ENCODE measurements at regions of chr5 and their contacts with region 1.

Region 1: DNA sequence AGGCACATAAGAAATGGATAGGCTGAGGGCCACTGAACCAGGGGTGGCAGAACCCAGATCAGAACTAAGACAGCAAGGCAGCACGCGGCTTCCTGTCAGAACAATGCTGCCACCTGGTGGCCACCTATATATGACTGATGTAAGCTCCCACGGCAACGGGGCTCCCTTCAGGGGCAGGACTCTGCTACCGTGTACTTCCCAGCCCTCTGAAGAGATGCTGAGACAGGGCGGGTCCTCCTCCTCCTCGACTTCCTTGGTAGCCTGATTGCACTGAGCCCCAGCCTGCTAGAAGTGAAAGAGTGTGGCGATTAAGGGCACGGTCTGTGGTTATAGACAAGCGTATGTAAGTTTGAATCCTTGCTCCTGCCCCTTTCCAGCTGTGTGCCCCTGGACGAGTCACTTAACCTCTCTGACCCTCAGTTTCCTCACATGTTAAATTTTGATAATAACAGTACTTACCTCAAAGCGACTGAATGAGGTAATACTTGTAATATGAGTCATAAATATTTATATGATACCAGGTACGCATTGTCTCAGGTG is 13.3 kb downstream of the RPS14 start:
- DNase-seq: peak; percentile 89
- ATAC-seq: peak; percentile 81
- H3K4me3 ChIP-seq: no peak overlapping the region
- H3K27ac ChIP-seq: no peak overlapping the region
- H3K4me1 ChIP-seq: peaks cover 5% of the 10 kb centered on the region
- H3K27me3 ChIP-seq: no peaks in the 10 kb centered on the region
- CTCF ChIP-seq: peak; percentile 85
- POLR2A ChIP-seq: no peak
- RAD21 ChIP-seq: peak; percentile 88

Region 2: GRCh38 chr5:150000256-150000989 is 435.8 kb before region 1 on chr5 and contains the starts of genes HMGXB3 and TIGD6:
- CTCF ChIA-PET with region 1: no interaction called
- POLR2A ChIA-PET with region 1: no interaction called
- dilution Hi-C with region 1: no loop called
- in situ Hi-C with region 1: no loop called
- intact Hi-C with region 1: loop called (anchors 10 kb)
- DNase-seq: peak; percentile 95
- ATAC-seq: peak; percentile 88
- H3K4me3 ChIP-seq: peak within 1 kb of the TSS; percentile 62
- H3K27ac ChIP-seq: peak within 1 kb of the TSS; percentile 75
- H3K4me1 ChIP-seq: no peaks in the 10 kb centered on the region; the same call in 1 of the 2 replicates
- H3K27me3 ChIP-seq: no peaks in the 10 kb centered on the region
- CTCF ChIP-seq: no peak
- POLR2A ChIP-seq: peak; percentile 92
- RAD21 ChIP-seq: no peak; the same call in 1 of the 2 replicates
- total RNA-seq, gene HMGXB3: 27.6 and 29.2 TPM in 2 replicates
- total RNA-seq, gene TIGD6: 6.1 and 6.6 TPM in 2 replicates

Region 3: DNA sequence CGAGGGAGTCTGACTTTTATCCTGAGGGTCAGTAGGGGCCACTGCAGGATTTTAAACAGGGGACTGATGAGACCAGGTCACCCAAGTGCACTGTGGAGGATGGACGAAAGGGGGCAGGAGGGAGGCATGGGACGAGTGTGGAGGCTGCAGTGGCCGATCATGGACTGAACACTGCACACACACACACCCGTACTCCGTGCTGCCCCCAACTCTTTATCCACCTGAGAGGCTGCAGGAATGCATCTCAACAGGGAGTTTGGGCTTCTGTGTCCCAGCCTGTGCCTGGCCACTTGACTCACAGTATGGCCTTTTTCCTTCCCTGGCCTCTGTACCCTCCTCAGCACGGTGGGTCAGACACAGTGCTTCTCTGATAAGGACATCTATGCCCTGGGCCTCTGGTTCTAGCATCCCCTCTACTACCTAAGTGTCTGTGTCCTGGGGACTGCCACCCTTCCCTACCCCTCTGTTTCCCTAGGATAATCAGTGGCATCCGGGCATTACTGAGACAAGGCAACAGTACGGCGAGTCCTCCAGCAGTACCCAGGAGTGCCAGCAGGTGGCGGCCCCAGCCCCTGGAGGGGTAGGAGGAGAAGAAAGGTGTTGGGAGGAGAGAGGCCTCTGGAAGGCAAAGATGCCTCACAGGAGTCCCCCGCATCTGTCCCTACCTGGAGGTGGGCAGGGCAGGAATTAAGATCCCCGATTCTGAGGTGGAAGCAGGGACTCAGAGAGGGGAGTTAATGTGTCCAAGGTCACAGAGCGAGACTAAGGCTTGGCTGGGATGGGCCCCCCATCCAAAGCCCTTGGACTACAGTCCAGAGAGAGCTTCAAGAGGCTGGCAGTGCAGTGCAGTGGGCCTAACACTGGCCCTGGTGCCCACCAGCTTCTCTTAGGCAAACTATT is 274.7 kb before region 1 on chr5:
- CTCF ChIA-PET with region 1: no interaction called
- POLR2A ChIA-PET with region 1: no interaction called
- dilution Hi-C with region 1: no loop called
- in situ Hi-C with region 1: no loop called
- intact Hi-C with region 1: loop called (anchors 1 kb)
- DNase-seq: peak; percentile 65
- ATAC-seq: peak; percentile 91
- H3K4me3 ChIP-seq: no peak overlapping the region
- H3K27ac ChIP-seq: no peak overlapping the region
- H3K4me1 ChIP-seq: peaks cover 26% of the 10 kb centered on the region
- H3K27me3 ChIP-seq: no peaks in the 10 kb centered on the region
- CTCF ChIP-seq: peak; percentile 94
- POLR2A ChIP-seq: peak; percentile 8; the same call in 1 of the 2 replicates
- RAD21 ChIP-seq: peak; percentile 91

Region 4: DNA sequence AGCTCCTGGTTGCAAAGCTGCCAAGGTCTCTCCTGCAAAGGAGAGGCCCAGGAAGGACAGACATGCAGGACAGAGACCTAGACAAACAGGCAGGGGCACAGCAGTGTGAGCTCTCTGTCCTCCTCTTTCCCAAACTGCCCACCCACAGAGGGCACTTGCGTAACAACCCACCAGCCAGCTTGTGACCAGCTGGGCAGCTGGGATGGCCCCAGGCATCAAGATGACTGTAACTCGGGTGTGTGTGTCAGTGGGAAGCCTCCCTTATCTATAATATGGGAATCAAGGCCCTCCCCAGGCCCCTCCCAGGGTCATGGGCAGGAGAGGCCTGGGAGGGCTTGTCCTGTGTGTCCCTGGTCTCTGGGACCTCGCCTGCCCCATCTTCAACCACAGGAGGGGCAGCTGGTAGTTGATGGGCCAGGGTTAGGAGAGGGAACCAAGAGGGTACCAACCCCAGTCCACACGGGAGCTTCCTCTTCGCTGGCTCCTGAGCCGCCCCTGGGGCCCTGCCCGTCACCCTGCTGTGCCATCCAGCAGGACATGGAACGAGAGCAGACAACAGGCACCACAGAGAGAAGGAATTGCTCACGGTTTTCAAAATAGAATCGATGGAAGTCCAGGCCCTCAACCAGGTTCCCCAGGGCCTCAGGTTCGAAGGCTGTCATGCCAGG is 208.5 kb before region 1 on chr5:
- CTCF ChIA-PET with region 1: interaction called, 3 read pairs
- POLR2A ChIA-PET with region 1: no interaction called
- dilution Hi-C with region 1: no loop called
- in situ Hi-C with region 1: no loop called
- intact Hi-C with region 1: loop called (anchors 2 kb)
- DNase-seq: peak; percentile 43
- ATAC-seq: peak; percentile 60
- H3K4me3 ChIP-seq: no peak overlapping the region
- H3K27ac ChIP-seq: no peak overlapping the region
- H3K4me1 ChIP-seq: peaks cover 3% of the 10 kb centered on the region; the same call in 1 of the 2 replicates
- H3K27me3 ChIP-seq: no peaks in the 10 kb centered on the region
- CTCF ChIP-seq: no peak
- POLR2A ChIP-seq: no peak
- RAD21 ChIP-seq: no peak

Region 5: DNA sequence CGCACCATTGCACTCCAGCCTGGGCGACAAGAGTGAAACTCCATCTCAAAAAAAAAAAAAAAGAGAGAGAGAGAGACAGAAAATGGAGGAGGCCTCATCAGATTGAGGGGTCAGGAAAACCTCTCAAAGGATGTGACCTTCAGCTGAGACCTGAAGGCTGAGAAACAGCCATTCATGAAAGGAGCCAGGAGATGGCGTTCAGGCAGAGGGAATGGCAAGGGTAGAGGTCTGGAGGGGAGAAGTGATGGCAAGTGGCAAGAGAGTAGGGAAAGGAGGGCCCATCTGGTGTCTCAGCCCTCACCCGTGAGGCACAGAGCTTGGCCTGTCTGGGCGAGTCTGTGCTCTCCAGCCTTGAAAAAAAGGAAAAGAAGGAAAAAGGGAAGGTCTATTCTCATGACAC is 163.7 kb before region 1 on chr5:
- CTCF ChIA-PET with region 1: no interaction called
- POLR2A ChIA-PET with region 1: no interaction called
- dilution Hi-C with region 1: no loop called
- in situ Hi-C with region 1: loop called (anchors 10 kb)
- intact Hi-C with region 1: loop called (anchors 1 kb)
- DNase-seq: peak; percentile 52
- ATAC-seq: peak; percentile 89
- H3K4me3 ChIP-seq: no peak overlapping the region
- H3K27ac ChIP-seq: no peak overlapping the region
- H3K4me1 ChIP-seq: peaks cover 7% of the 10 kb centered on the region
- H3K27me3 ChIP-seq: no peaks in the 10 kb centered on the region
- CTCF ChIP-seq: peak; percentile 65
- POLR2A ChIP-seq: no peak
- RAD21 ChIP-seq: peak; percentile 88

Region 6: GRCh38 chr5:150357326-150358260 is 78.6 kb before region 1 on chr5 and contains the start of gene TCOF1:
- CTCF ChIA-PET with region 1: no interaction called
- POLR2A ChIA-PET with region 1: no interaction called
- dilution Hi-C with region 1: no loop called
- in situ Hi-C with region 1: no loop called
- intact Hi-C with region 1: loop called (anchors 2 kb)
- DNase-seq: peak; percentile 91
- ATAC-seq: peak; percentile 100
- H3K4me3 ChIP-seq: peak within 1 kb of the TSS; percentile 81
- H3K27ac ChIP-seq: peak within 1 kb of the TSS; percentile 66
- H3K4me1 ChIP-seq: peaks cover 6% of the 10 kb centered on the region
- H3K27me3 ChIP-seq: no peaks in the 10 kb centered on the region
- CTCF ChIP-seq: no peak
- POLR2A ChIP-seq: no peak
- RAD21 ChIP-seq: no peak; the same call in 1 of the 2 replicates
- total RNA-seq, gene TCOF1: 18.3 and 19.7 TPM in 2 replicates

Region 7: DNA sequence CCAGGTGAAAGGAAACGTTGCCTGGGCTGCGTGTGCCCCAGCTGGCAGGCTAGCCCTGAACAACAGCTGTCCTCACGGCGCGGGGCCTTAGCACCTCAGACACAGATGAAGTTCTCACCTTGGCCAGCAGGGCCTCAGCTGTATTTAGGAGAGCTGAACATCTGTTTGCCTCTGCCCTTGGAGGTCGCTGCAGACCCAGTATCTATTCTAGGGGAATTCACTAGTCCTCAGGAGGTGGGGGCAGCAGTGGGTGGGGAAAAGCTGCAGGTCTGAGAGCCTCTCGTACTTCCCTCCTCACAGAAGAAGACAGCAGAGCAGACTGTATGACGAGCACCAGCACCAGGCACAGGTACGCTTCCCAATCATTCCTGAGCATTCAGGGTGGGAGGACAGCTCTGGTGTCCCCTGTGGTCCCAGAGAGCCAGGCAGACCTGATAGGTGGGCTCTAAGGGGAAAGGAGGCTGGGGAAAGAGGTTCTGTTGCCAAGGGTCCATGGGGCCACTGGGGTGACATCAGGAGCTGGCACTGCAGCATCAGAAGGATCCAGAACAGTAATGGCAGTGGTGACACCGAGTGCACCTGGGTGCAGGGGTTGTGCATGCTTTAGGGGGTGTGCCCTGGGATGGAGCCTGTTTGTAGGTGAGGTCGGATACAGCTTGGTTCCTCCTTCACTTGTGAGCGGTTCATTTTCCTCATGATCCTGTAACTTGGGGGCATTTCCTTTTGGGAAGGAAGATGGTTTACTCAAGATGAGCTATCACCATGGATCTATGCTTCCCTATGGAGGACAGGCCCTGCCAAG is 37.3 kb before region 1 on chr5:
- CTCF ChIA-PET with region 1: no interaction called
- POLR2A ChIA-PET with region 1: no interaction called
- dilution Hi-C with region 1: no loop called
- in situ Hi-C with region 1: no loop called
- intact Hi-C with region 1: loop called (anchors 5 kb)
- DNase-seq: no peak
- ATAC-seq: no peak
- H3K4me3 ChIP-seq: no peak overlapping the region
- H3K27ac ChIP-seq: peak overlapping the region; percentile 39; the same call in 1 of the 2 replicates
- H3K4me1 ChIP-seq: peaks cover 19% of the 10 kb centered on the region
- H3K27me3 ChIP-seq: no peaks in the 10 kb centered on the region
- CTCF ChIP-seq: peak; percentile 20; the same call in 1 of the 2 replicates
- POLR2A ChIP-seq: no peak
- RAD21 ChIP-seq: no peak

Region 8: GRCh38 chr5:150672237-150672883 is 236.1 kb after region 1 on chr5:
- CTCF ChIA-PET with region 1: no interaction called
- POLR2A ChIA-PET with region 1: no interaction called
- dilution Hi-C with region 1: no loop called
- in situ Hi-C with region 1: no loop called
- intact Hi-C with region 1: no loop called
- DNase-seq: no peak
- ATAC-seq: peak; percentile 43
- H3K4me3 ChIP-seq: peak overlapping the region; percentile 49
- H3K27ac ChIP-seq: no peak overlapping the region; the same call in 1 of the 2 replicates
- H3K4me1 ChIP-seq: peaks cover 13% of the 10 kb centered on the region
- H3K27me3 ChIP-seq: peaks cover 12% of the 10 kb centered on the region
- CTCF ChIP-seq: no peak
- POLR2A ChIP-seq: no peak
- RAD21 ChIP-seq: no peak

Measured in IMR-90 (cell line).